Ascending aorta (tissue), 2 donors: ENCODE measurements at regions of chr1 and their contacts with region 1.

Region 1: GRCh38 chr1:146012737-146013403 is 8.7 kb downstream of the HJV start:
- DNase-seq: peak in 1 of 2 donors; percentile 80
- H3K4me3 ChIP-seq: no peak overlapping the region
- H3K27ac ChIP-seq: no peak overlapping the region
- H3K4me1 ChIP-seq: peaks cover 0 to 1% of the 10 kb centered on the region in 2 donors
- H3K27me3 ChIP-seq: no peaks in the 10 kb centered on the region
- CTCF ChIP-seq: peak; percentile 79 to 80 (median 79)

Region 2: DNA sequence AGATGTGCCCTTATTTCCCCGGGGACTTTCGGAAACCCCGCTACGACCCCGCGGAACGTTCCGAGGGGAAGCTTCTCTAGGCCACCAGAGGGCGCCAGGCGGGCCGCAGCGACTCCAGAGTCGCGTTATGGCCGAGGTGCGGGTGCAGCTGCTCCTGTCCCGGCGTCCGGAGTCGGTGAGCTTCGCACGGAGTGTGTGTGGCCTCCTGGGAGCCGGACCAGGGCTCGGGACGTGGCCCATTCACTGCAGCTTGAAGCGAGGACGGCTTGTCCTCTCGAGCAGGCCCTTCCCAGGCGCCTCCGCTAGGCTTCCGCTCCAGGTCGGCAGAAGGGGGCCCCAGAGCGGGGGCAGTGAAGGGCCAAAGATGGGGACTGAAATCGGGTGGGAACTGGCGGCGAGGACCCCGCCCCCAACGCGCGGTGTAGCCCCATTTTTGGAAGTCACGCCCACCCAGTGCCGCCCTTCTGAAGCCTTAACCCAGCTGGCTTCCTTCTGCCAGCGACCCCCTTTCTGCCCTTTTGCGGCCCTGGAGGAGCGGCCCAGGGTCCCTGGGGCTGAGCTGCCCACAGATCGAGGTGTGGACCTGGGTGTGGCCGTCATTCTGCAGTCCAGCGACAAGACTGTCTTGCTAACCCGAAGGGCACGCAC is 167.2 kb before region 1 on chr1 and contains the start of gene NUDT17:
- intact Hi-C with region 1: loop called (anchors 1 kb)
- DNase-seq: peak; percentile 17 to 88
- H3K4me3 ChIP-seq: peak within 1 kb of the TSS; percentile 51 to 65
- H3K27ac ChIP-seq: peak within 1 kb of the TSS; percentile 73 to 78
- H3K4me1 ChIP-seq: peaks cover 0 to 21% of the 10 kb centered on the region in 2 donors
- H3K27me3 ChIP-seq: no peaks in the 10 kb centered on the region
- CTCF ChIP-seq: peak; percentile 88 to 98 (median 94)
- total RNA-seq, gene NUDT17: not detected

Region 3: GRCh38 chr1:145891587-145892485 is 121.0 kb before region 1 on chr1:
- intact Hi-C with region 1: loop called (anchors 5 kb)
- DNase-seq: peak; percentile 89 to 99
- H3K4me3 ChIP-seq: peak overlapping the region; percentile 10 to 23
- H3K27ac ChIP-seq: peak overlapping the region; percentile 92 to 98
- H3K4me1 ChIP-seq: peaks cover 14 to 36% of the 10 kb centered on the region in 2 donors
- H3K27me3 ChIP-seq: no peaks in the 10 kb centered on the region
- CTCF ChIP-seq: peak; percentile 93 to 97 (median 95)

Region 4: DNA sequence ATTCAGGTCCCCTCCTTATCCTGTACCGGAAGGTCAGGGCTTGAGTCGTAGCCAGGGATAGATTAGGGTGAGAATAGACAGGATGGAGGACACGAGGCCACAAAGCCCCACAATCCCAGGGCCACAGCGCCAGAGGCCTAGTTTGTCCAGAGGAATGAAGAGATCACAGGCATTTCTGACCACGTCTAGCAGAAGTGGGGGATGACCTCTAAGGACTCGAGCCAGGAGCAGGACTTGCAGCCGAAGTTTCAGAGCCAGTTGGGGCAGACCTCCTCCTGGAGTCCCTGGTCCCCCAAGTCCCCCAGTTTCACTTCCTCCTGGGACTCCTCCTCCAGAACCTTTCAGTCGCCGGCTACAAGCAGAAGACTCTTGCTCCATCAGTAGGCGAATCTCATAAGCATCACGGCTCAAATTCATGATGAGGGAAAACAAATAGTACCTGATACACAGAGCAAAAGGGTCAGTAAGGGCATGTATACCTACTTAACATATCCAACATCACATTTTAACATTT is 100.7 kb before region 1 on chr1:
- intact Hi-C with region 1: loop called (anchors 5 kb)
- DNase-seq: peak in 1 of 2 donors; percentile 50
- H3K4me3 ChIP-seq: no peak overlapping the region
- H3K27ac ChIP-seq: no peak overlapping the region
- H3K4me1 ChIP-seq: peaks cover 8 to 11% of the 10 kb centered on the region in 2 donors
- H3K27me3 ChIP-seq: no peaks in the 10 kb centered on the region
- CTCF ChIP-seq: no peak

Region 5: DNA sequence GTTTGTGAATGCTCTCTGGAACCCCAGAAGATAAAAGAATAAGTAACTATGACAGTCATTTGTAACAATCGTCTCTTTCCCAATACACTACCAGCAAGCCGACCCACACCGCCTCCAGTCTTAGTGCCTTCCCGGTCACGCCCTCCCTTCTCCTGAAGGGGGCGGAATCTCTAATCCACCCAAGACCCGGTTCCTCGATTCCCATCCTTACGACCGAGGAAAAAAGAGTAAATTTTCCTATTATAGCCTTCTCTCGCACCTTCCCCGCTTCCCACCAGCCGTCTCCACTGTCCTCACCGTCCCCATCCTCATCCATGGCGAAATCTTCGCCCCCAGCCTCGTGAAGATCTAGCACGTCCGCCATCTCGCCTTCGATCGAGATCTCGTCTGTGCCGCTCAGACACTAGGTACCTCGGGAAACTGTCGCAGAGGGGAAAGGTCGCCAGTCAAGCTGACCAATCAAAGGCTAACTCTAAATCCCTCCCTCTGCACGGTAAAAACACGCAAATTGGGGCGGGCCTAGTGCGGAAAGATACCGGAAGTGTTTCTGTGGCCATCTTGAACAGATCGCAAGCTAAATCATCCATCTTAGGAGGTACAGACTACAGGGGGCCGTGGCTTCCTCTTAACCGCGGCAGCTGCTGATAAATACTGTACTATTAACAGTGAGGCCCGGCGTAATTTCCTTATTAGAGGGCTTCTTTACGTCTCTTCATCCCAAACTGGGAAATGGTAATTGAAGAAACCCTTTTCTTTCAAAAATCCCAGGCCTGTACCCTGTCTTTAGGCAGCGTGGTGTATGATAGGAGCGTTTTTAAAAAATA is 85.6 kb before region 1 on chr1 and contains the start of gene RBM8A:
- intact Hi-C with region 1: loop called (anchors 2 kb)
- DNase-seq: peak; percentile 88 to 98
- H3K4me3 ChIP-seq: peak within 1 kb of the TSS; percentile 70 to 73
- H3K27ac ChIP-seq: peak within 1 kb of the TSS; percentile 97 to 98
- H3K4me1 ChIP-seq: peaks cover 6 to 12% of the 10 kb centered on the region in 2 donors
- H3K27me3 ChIP-seq: no peaks in the 10 kb centered on the region
- CTCF ChIP-seq: peak; percentile 63 to 76 (median 68)
- total RNA-seq, gene RBM8A: 48.9 TPM

Region 6: GRCh38 chr1:145963995-145964901 is 48.6 kb before region 1 on chr1 and contains the starts of genes ANKRD34A and POLR3GL:
- intact Hi-C with region 1: loop called (anchors 5 kb)
- DNase-seq: peak; percentile 94 to 99
- H3K4me3 ChIP-seq: peak within 1 kb of the TSS; percentile 65 to 92
- H3K27ac ChIP-seq: peak within 1 kb of the TSS; percentile 96 to 97
- H3K4me1 ChIP-seq: peaks cover 17 to 36% of the 10 kb centered on the region in 2 donors
- H3K27me3 ChIP-seq: no peaks in the 10 kb centered on the region
- CTCF ChIP-seq: no peak
- total RNA-seq, gene ANKRD34A: 13.6 TPM
- total RNA-seq, gene POLR3GL: 22.9 TPM

Region 7: GRCh38 chr1:145978854-145979759 is 33.8 kb before region 1 on chr1:
- intact Hi-C with region 1: loop called (anchors 1 kb)
- DNase-seq: peak; percentile 94 to 99
- H3K4me3 ChIP-seq: peak overlapping the region; percentile 35 to 37
- H3K27ac ChIP-seq: peak overlapping the region; percentile 90 to 98
- H3K4me1 ChIP-seq: peaks cover 36 to 63% of the 10 kb centered on the region in 2 donors
- H3K27me3 ChIP-seq: no peaks in the 10 kb centered on the region
- CTCF ChIP-seq: peak in 1 of 3 experiments; percentile 23